CD8-positive, alpha-beta T cell (primary cell): ENCODE measurements at regions of chr6 and their contacts with region 1.

Region 1: DNA sequence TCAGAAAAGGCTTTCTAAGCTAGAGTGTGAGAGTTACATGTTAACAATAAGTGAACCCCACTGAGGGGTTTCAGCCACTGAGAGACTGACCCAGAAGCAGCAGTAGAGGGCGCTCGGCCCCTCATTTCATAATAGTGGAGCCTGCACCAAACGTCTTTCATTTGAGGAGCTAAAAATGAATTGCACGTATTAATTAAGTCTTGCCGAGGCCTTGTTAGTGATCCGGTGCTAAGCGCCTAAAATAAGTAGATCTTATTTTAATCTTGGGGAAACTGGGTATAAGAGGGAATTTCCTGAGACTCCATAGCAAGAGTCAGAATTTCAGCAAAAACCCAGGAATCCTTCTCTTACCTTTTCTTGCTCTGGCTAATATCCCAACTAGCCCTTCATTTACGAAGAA is 209.7 kb downstream of the FARS2 start:
- DNase-seq: peak; percentile 34 to 77 (median 64)
- ATAC-seq: peak; percentile 62
- H3K4me3 ChIP-seq: no peak overlapping the region
- H3K4me3 Mint-ChIP-seq: no peak overlapping the region
- H3K27ac ChIP-seq: no peak overlapping the region
- H3K27ac Mint-ChIP-seq: no peak overlapping the region
- H3K4me1 ChIP-seq: peaks cover 6% of the 10 kb centered on the region
- H3K4me1 Mint-ChIP-seq: peaks cover 4% of the 10 kb centered on the region
- H3K27me3 ChIP-seq: no peaks in the 10 kb centered on the region
- H3K27me3 Mint-ChIP-seq: no peaks in the 10 kb centered on the region
- CTCF ChIP-seq: peak; percentile 76

Region 2: DNA sequence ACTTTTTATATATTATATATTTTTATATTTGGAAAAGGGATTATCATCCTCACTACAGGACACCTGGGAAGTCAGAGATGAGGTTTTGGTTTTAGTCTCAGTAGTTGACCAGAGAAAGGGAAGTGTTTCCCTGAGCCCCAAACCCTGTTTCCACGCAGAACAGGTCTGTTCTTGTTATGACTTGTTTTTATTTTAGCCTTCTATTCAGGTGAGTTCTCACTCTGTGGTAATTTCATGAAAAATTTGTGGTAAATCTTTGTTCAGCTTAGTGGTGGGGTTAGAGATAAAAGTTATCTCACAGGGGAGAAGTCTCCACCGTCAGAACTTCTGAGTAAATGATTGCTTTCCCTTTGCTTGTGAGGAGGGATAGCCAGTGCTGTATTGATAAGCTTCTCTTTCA is 15.2 kb after region 1 on chr6:
- CTCF ChIA-PET with region 1: interaction called, 19 read pairs
- POLR2A ChIA-PET with region 1: interaction called, 3 read pairs
- intact Hi-C with region 1: no loop called
- DNase-seq: no peak
- ATAC-seq: no peak
- H3K4me3 ChIP-seq: no peak overlapping the region
- H3K4me3 Mint-ChIP-seq: no peak overlapping the region
- H3K27ac ChIP-seq: no peak overlapping the region
- H3K27ac Mint-ChIP-seq: peak overlapping the region; percentile 60
- H3K4me1 ChIP-seq: peaks cover 5% of the 10 kb centered on the region
- H3K4me1 Mint-ChIP-seq: peaks cover 17% of the 10 kb centered on the region
- H3K27me3 ChIP-seq: no peaks in the 10 kb centered on the region
- H3K27me3 Mint-ChIP-seq: no peaks in the 10 kb centered on the region
- CTCF ChIP-seq: no peak

Region 3: DNA sequence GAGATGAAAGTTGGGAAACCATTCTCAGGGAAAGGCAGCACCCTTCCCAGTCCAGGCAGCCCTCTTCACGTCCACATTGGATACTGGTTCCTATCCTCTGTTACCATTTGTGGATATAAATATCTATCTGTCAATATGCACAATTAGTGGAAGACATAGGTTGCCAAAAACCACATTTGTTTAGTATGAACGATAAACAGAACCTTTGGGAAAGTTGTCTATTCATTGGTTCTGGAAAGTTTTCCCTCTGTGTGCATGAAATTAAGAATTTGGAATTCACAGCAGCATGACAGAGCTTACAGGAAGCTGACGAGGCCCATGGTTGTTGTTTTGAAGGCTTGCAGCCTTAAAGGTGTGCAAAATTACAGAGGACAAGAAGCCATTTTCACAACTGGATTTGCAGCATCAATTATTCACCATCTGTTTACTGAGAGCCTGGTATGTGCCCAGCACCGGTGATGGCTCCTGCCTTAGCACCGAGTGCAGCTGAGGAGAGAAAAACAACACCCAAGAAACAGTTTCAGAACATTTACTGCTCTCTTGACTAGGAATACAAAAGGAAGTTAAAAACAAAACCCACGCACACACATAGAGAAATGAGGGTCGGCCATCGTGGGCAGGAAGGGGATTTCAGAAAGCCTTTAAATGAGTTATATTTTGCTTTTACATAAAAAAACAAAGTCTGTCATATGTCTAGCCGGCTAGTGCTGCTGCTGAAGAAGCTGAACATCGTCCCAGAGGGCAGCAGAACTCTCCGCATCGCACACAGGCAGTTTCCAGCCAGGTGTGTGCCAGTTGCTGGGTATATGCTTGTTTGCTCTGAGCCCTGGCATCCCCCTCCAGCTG is 109.9 kb after region 1 on chr6:
- CTCF ChIA-PET with region 1: no interaction called
- POLR2A ChIA-PET with region 1: no interaction called
- intact Hi-C with region 1: no loop called
- DNase-seq: peak in 6 of 9 experiments; percentile 9 to 75 (median 49)
- ATAC-seq: peak; percentile 84
- H3K4me3 ChIP-seq: no peak overlapping the region
- H3K4me3 Mint-ChIP-seq: peak overlapping the region; percentile 57
- H3K27ac ChIP-seq: peak overlapping the region in 1 of 2 experiments; percentile 26
- H3K27ac Mint-ChIP-seq: peak overlapping the region; percentile 94
- H3K4me1 ChIP-seq: peaks cover 14% of the 10 kb centered on the region
- H3K4me1 Mint-ChIP-seq: peaks cover 29% of the 10 kb centered on the region
- H3K27me3 ChIP-seq: no peaks in the 10 kb centered on the region
- H3K27me3 Mint-ChIP-seq: no peaks in the 10 kb centered on the region
- CTCF ChIP-seq: no peak

Region 4: GRCh38 chr6:5670811-5671561 is 199.9 kb after region 1 on chr6:
- CTCF ChIA-PET with region 1: interaction called, 9 read pairs
- POLR2A ChIA-PET with region 1: interaction called, 3 read pairs
- intact Hi-C with region 1: loop called (anchors 2 to 5 kb)
- DNase-seq: peak in 2 of 9 experiments; percentile 22 to 63
- ATAC-seq: peak; percentile 45
- H3K4me3 ChIP-seq: no peak overlapping the region
- H3K4me3 Mint-ChIP-seq: peak overlapping the region; percentile 33
- H3K27ac ChIP-seq: no peak overlapping the region
- H3K27ac Mint-ChIP-seq: peak overlapping the region; percentile 55
- H3K4me1 ChIP-seq: peaks cover 57% of the 10 kb centered on the region
- H3K4me1 Mint-ChIP-seq: peaks cover 65% of the 10 kb centered on the region
- H3K27me3 ChIP-seq: no peaks in the 10 kb centered on the region
- H3K27me3 Mint-ChIP-seq: no peaks in the 10 kb centered on the region
- CTCF ChIP-seq: no peak

Region 5: GRCh38 chr6:5866547-5867101 is 395.6 kb after region 1 on chr6:
- CTCF ChIA-PET with region 1: no interaction called
- POLR2A ChIA-PET with region 1: interaction called, 3 read pairs
- intact Hi-C with region 1: loop called in 1 of 2 experiments (anchors 10 kb)
- DNase-seq: peak in 3 of 9 experiments; percentile 30 to 57 (median 54)
- ATAC-seq: peak; percentile 60
- H3K4me3 ChIP-seq: peak overlapping the region; percentile 34 to 35
- H3K4me3 Mint-ChIP-seq: peak overlapping the region; percentile 74
- H3K27ac ChIP-seq: peak overlapping the region; percentile 40 to 85
- H3K27ac Mint-ChIP-seq: peak overlapping the region; percentile 91
- H3K4me1 ChIP-seq: peaks cover 44% of the 10 kb centered on the region
- H3K4me1 Mint-ChIP-seq: peaks cover 52% of the 10 kb centered on the region
- H3K27me3 ChIP-seq: no peaks in the 10 kb centered on the region
- H3K27me3 Mint-ChIP-seq: no peaks in the 10 kb centered on the region
- CTCF ChIP-seq: no peak

Region 6: GRCh38 chr6:6003621-6004366 is 532.8 kb after region 1 on chr6:
- CTCF ChIA-PET with region 1: interaction called, 10 read pairs
- POLR2A ChIA-PET with region 1: interaction called, 3 read pairs
- intact Hi-C with region 1: loop called (anchors 2 to 10 kb)
- DNase-seq: peak in 2 of 9 experiments; percentile 39 to 62
- ATAC-seq: no peak
- H3K4me3 ChIP-seq: peak overlapping the region; percentile 9 to 37
- H3K4me3 Mint-ChIP-seq: peak overlapping the region; percentile 74
- H3K27ac ChIP-seq: no peak overlapping the region
- H3K27ac Mint-ChIP-seq: no peak overlapping the region
- H3K4me1 ChIP-seq: peaks cover 70% of the 10 kb centered on the region
- H3K4me1 Mint-ChIP-seq: peaks cover 65% of the 10 kb centered on the region
- H3K27me3 ChIP-seq: peaks cover 93 to 95% of the 10 kb centered on the region in 2 experiments
- H3K27me3 Mint-ChIP-seq: peaks cover 80% of the 10 kb centered on the region
- CTCF ChIP-seq: no peak

Region 7: DNA sequence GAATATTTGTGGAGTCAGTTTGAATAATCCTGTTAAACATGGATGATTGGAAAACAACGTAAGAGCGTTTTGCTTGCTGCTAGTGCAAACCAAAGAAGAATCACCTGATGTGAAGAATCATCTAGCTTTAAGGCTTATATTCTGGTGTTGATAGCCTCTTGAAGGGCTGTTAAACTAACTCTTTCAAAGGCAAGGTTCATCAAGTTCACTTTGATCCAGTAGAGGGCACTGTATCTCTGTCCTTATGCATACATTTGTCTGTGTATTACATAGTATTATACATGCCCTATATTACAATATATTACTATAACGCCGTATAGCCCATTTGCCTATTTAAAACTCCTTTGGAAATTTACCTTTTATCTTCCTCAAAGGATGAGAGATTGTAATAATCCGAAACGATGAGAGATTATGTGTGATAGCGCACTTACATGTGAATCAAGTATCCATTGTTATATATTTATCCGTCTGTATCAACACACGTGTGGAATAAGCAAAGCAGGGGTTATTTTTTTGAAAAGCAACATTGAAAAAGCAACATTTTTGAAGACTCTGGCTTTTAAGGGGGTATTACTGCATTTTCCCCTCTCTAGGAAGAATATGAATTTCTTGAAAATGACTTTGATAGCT is 586.5 kb after region 1 on chr6:
- CTCF ChIA-PET with region 1: interaction called, 3 read pairs
- POLR2A ChIA-PET with region 1: no interaction called
- intact Hi-C with region 1: loop called (anchors 2 kb)
- DNase-seq: peak in 2 of 9 experiments; percentile 46 to 68
- ATAC-seq: no peak
- H3K4me3 ChIP-seq: no peak overlapping the region
- H3K4me3 Mint-ChIP-seq: no peak overlapping the region
- H3K27ac ChIP-seq: no peak overlapping the region
- H3K27ac Mint-ChIP-seq: no peak overlapping the region
- H3K4me1 ChIP-seq: no peaks in the 10 kb centered on the region
- H3K4me1 Mint-ChIP-seq: no peaks in the 10 kb centered on the region
- H3K27me3 ChIP-seq: no peaks in the 10 kb centered on the region
- H3K27me3 Mint-ChIP-seq: peaks cover 43% of the 10 kb centered on the region
- CTCF ChIP-seq: no peak

Region 8: GRCh38 chr6:6315660-6316059 is 844.6 kb after region 1 on chr6:
- CTCF ChIA-PET with region 1: no interaction called
- POLR2A ChIA-PET with region 1: no interaction called
- intact Hi-C with region 1: loop called in 1 of 2 experiments (anchors 5 kb)
- DNase-seq: peak in 4 of 9 experiments; percentile 14 to 52 (median 28)
- ATAC-seq: no peak
- H3K4me3 ChIP-seq: no peak overlapping the region
- H3K4me3 Mint-ChIP-seq: no peak overlapping the region
- H3K27ac ChIP-seq: no peak overlapping the region
- H3K27ac Mint-ChIP-seq: no peak overlapping the region
- H3K4me1 ChIP-seq: no peaks in the 10 kb centered on the region
- H3K4me1 Mint-ChIP-seq: peaks cover 5% of the 10 kb centered on the region
- H3K27me3 ChIP-seq: peaks cover 7% of the 10 kb centered on the region in 2 experiments
- H3K27me3 Mint-ChIP-seq: peaks cover 42% of the 10 kb centered on the region
- CTCF ChIP-seq: peak; percentile 80